ENCODE measurements at regions of chr10 and their contacts with region 1.

Region 1: DNA sequence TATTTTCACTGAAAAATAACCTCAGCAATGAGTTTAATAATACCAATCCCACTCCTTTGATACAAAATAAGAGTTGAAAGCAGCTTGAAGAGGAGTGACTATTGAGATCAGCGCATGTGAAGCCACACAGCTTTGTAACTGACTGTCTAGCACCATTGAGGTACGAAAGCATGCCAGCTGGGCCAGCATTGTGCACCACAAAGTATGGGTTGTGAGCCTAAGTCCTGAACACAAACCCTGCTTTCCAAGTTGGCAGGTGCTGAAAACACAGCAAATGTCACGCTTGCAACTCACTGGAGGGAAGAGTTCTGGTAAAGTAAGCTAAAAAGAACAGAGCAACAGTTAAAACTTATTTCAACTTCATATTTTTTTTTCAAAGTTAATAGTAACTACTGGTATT is 4.0 kb upstream of the FAM53B start:
- DNase-seq: no peak
- H3K4me3 Mint-ChIP-seq: no peak overlapping the region
- H3K27ac Mint-ChIP-seq: no peak overlapping the region
- H3K4me1 Mint-ChIP-seq: peaks cover 25% of the 10 kb centered on the region
- H3K27me3 Mint-ChIP-seq: no peaks in the 10 kb centered on the region

Region 2: GRCh38 chr10:124916585-124917427 is 168.6 kb after region 1 on chr10:
- CTCF ChIA-PET with region 1: interaction called, 4 read pairs
- POLR2A ChIA-PET with region 1: no interaction called
- intact Hi-C with region 1: loop called (anchors 2 kb)
- DNase-seq: peak; percentile 97
- H3K4me3 Mint-ChIP-seq: peak overlapping the region; percentile 87
- H3K27ac Mint-ChIP-seq: peak overlapping the region; percentile 81
- H3K4me1 Mint-ChIP-seq: peaks cover 30% of the 10 kb centered on the region
- H3K27me3 Mint-ChIP-seq: no peaks in the 10 kb centered on the region